ENCODE measurements at regions of chr20 and their contacts with region 1.

Region 1: DNA sequence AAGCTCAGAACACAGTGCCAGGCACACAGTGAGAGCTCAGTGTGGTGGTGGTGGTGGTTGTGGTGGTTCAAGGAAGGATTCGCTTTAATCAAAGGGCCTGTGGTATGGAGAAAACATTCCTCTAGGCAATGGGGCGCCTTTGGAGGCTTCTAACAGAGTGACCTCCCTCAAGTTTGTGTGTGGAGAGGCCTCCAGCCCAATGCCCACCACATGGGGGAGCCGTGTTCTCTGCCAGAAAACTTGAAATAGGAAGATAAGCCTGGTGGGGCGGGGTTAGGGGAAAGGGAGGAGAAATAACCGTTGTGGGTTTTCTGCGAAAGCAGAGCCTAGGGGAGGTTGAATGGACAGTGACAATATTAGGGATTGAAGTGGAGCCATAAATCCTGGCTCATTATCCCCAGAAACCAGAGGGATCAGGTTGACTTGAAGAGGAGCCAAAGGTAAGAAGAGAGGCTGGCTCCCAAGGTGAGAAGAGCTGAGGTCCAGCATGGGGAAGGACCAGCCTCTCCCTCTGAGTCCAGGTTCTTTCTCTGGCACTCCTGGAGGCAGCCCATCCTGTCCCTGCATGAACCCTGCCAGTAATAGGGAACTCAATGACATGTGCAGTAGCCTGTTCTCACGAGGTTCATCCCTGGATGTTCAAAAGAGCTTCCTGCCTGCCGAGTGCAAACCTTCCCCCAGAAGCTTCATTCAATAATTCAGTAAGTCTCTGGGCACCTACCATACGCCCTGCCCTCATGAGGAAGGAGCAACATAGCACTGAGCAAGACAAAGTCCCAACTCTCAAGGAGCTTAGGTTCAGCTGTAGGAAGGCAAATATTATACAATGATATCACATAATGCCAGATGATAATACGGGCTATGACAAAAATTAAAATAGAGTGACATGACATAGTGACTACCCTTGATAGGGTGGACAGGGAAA is 51.4 kb downstream of the TGM2 start:
- DNase-seq: peak; percentile 38 to 79
- H3K4me3 ChIP-seq: no peak overlapping the region
- H3K27ac ChIP-seq: no peak overlapping the region
- H3K4me1 ChIP-seq: no peaks in the 10 kb centered on the region
- H3K27me3 ChIP-seq: no peaks in the 10 kb centered on the region
- CTCF ChIP-seq: peak; percentile 66 to 75 (median 74)
- EP300 ChIP-seq: no peak
- POLR2A ChIP-seq: no peak
- RAD21 ChIP-seq: peak; percentile 67 to 79

Region 2: GRCh38 chr20:38057351-38057972 is 56.2 kb before region 1 on chr20:
- CTCF ChIA-PET with region 1: interaction called, 13 read pairs
- POLR2A ChIA-PET with region 1: no interaction called
- DNase-seq: peak in 1 of 2 experiments; percentile 92
- H3K4me3 ChIP-seq: no peak overlapping the region
- H3K27ac ChIP-seq: no peak overlapping the region
- H3K4me1 ChIP-seq: no peaks in the 10 kb centered on the region
- H3K27me3 ChIP-seq: no peaks in the 10 kb centered on the region
- CTCF ChIP-seq: peak; percentile 72 to 94 (median 90)
- EP300 ChIP-seq: no peak
- POLR2A ChIP-seq: no peak
- RAD21 ChIP-seq: peak; percentile 85 to 90

Region 3: DNA sequence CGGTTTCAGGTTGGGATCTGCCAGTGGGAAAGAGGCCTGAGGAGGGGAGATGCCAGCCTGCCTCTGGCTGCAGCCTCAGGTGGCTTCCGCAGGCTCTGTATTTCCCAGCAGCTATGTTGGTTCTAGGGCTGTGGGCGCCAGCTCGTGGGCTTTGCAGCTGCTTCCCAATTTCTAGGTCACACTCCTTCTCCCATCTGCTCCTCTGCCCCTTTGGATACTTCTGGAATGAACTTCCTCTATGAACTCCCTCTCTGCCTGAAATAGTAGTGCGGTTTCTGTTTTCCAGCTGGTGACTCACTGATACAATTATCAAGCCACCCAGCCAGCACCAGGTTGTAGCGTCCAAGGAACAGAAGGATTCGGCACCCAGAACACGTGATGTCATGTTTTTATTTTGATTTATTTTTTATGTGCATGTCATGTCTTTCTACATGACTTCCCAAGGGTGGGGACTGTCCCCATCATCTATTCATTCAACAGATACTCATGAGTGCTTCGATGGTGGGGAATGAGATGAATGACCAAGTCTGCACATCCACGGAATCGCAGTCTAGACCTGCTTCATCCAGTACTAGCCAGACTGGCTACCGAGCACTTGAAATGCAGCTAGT is 13.5 kb after region 1 on chr20:
- CTCF ChIA-PET with region 1: interaction called, 16 read pairs
- POLR2A ChIA-PET with region 1: no interaction called
- DNase-seq: no peak
- H3K4me3 ChIP-seq: no peak overlapping the region
- H3K27ac ChIP-seq: no peak overlapping the region
- H3K4me1 ChIP-seq: peaks cover 0 to 3% (median 0%) of the 10 kb centered on the region in 4 experiments; a peak in 2 of 7 replicates
- H3K27me3 ChIP-seq: no peaks in the 10 kb centered on the region
- CTCF ChIP-seq: no peak
- EP300 ChIP-seq: no peak
- POLR2A ChIP-seq: no peak
- RAD21 ChIP-seq: no peak

Region 4: GRCh38 chr20:38135651-38136420 is 22.2 kb after region 1 on chr20:
- CTCF ChIA-PET with region 1: interaction called, 14 read pairs
- POLR2A ChIA-PET with region 1: no interaction called
- DNase-seq: no peak
- H3K4me3 ChIP-seq: no peak overlapping the region
- H3K27ac ChIP-seq: no peak overlapping the region
- H3K4me1 ChIP-seq: 0 out of 7 replicates have a peak, but pooled peaks cover 0 to 4% (median 0%) of the 10 kb centered on the region in 4 experiments
- H3K27me3 ChIP-seq: no peaks in the 10 kb centered on the region
- CTCF ChIP-seq: no peak
- EP300 ChIP-seq: no peak
- POLR2A ChIP-seq: no peak
- RAD21 ChIP-seq: no peak

Region 5: DNA sequence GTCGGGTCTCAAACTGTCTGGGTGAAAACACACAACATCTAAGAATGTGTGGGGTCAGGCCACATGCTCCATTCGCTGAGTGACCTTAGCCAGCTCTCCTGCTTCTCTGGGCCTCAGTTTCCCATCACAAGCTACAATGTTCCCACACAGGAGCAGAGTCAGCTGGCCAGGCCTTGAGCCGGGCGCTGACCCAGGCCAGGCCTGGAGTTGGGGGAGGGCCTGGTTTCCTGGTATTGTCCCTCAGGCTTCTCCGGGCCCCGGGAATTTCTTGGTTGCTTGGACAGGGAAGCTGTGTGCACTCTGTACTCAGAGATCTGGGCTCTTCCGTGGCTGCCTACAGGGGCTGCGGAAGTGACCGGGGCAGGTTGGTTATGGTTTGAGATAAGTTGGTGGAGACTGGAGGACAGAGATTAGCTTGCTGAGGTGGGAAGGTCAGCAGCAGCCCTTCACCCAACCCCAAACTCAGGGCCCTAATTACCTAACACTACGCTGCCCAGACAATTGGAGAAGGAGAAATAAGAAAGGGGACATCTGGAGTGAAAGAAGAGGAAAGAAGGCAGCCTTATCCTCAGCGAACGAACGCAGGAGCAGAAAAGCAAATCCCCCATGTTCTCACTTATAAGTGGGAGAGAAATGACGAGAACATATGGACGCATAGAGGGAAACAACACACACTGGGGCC is 45.1 kb after region 1 on chr20:
- CTCF ChIA-PET with region 1: interaction called, 22 read pairs
- POLR2A ChIA-PET with region 1: no interaction called
- DNase-seq: no peak
- H3K4me3 ChIP-seq: no peak overlapping the region
- H3K27ac ChIP-seq: no peak overlapping the region
- H3K4me1 ChIP-seq: no peaks in the 10 kb centered on the region
- H3K27me3 ChIP-seq: no peaks in the 10 kb centered on the region
- CTCF ChIP-seq: no peak
- EP300 ChIP-seq: no peak
- POLR2A ChIP-seq: no peak
- RAD21 ChIP-seq: no peak

Region 6: DNA sequence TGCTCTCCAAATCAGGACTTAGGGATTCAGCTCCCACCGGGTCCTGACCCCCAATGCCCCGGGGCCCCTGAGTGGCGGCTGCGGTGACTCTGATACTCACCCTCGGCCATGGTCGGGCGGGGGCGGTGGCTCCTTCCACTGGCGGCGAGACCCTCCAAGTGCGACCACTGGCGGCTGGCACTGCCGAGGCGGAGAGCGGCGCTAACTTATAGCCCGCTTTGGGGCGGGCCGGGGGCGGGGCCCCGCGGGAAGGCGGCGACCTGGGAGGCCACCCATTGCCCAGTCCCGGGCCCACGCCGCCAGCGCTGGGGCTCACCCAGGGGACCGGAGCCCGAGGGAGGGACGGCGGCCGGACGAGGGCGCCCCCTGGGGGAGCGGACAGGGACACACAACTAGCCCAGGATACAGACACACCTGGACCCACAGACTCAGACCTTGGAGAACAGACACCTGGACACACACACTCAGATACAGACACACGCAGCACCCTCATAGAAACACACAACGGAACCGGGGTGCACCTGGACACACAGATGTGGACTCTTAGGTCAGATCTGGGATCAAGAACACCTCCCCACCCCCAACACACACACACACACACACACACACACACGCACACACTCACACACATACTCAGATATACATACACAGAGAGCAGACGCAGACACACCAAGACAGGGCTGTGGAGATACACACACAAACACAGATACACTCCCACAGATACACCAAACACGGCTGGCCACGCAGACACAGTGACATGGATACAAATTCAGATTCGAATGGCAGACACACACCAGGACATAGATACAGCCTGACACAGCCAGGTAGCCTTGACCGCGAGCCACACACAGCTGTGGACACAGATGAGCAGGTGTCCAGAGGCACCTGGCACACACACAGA is 51.7 kb after region 1 on chr20 and contains the start of gene TGM2:
- CTCF ChIA-PET with region 1: interaction called, 27 read pairs
- POLR2A ChIA-PET with region 1: no interaction called
- DNase-seq: peak in 1 of 2 experiments; percentile 79
- H3K4me3 ChIP-seq: peak within 1 kb of the TSS; percentile 15 to 58 (median 16); a peak in 5 of 8 replicates
- H3K27ac ChIP-seq: no peak within 1 kb of the TSS
- H3K4me1 ChIP-seq: peaks cover 0 to 2% (median 0%) of the 10 kb centered on the region in 4 experiments; a peak in 1 of 7 replicates
- H3K27me3 ChIP-seq: no peaks in the 10 kb centered on the region; a peak in 2 of 7 replicates
- CTCF ChIP-seq: peak; percentile 73 to 83 (median 82)
- EP300 ChIP-seq: no peak
- POLR2A ChIP-seq: no peak
- RAD21 ChIP-seq: peak; percentile 71 to 79
- total RNA-seq, gene TGM2: 1.0 and 1.3 TPM in 2 replicates

Region 7: DNA sequence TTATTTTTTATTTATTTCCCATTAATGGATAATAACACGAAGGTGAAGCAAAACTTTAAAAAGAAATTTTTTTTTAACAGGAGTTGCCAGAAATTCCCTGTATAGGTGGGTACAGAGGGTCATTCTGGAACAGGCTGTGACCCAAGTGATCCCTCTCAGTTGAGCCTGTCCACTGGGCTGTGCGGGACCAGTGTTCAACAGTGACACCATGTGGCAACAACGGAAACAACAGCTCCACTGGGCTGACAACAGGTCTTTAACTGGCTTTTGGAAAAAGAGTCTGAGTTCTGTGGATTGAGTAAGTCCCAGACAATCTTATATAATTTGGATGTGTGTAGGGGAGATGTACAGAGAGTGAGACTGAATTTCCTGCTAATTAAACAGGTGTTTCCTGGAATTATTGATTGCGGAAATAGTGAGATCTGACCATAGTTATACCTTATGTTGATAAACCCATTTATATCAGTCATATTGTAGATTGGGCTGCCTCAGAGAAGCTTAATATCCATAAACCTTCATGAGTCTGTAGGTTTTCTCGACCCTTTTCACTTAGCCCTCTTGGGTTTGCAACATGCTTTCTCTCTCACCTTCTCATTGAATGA is 129.3 kb after region 1 on chr20:
- CTCF ChIA-PET with region 1: interaction called, 12 read pairs
- POLR2A ChIA-PET with region 1: no interaction called
- DNase-seq: peak in 1 of 2 experiments; percentile 84
- H3K4me3 ChIP-seq: no peak overlapping the region
- H3K27ac ChIP-seq: no peak overlapping the region
- H3K4me1 ChIP-seq: peaks cover 0 to 4% (median 0%) of the 10 kb centered on the region in 4 experiments; a peak in 1 of 7 replicates
- H3K27me3 ChIP-seq: 0 out of 7 replicates have a peak, but pooled peaks cover 0 to 2% (median 0%) of the 10 kb centered on the region in 4 experiments
- CTCF ChIP-seq: peak; percentile 75 to 88 (median 87)
- EP300 ChIP-seq: no peak
- POLR2A ChIP-seq: no peak
- RAD21 ChIP-seq: peak; percentile 52 to 65

Region 8: GRCh38 chr20:38363004-38363747 is 249.5 kb after region 1 on chr20:
- CTCF ChIA-PET with region 1: no interaction called
- POLR2A ChIA-PET with region 1: no interaction called
- DNase-seq: no peak
- H3K4me3 ChIP-seq: no peak overlapping the region
- H3K27ac ChIP-seq: no peak overlapping the region
- H3K4me1 ChIP-seq: no peaks in the 10 kb centered on the region
- H3K27me3 ChIP-seq: no peaks in the 10 kb centered on the region
- CTCF ChIP-seq: no peak
- EP300 ChIP-seq: no peak
- POLR2A ChIP-seq: no peak
- RAD21 ChIP-seq: no peak